ENCODE measurements at regions of chr16 and their contacts with region 1.

Region 1: DNA sequence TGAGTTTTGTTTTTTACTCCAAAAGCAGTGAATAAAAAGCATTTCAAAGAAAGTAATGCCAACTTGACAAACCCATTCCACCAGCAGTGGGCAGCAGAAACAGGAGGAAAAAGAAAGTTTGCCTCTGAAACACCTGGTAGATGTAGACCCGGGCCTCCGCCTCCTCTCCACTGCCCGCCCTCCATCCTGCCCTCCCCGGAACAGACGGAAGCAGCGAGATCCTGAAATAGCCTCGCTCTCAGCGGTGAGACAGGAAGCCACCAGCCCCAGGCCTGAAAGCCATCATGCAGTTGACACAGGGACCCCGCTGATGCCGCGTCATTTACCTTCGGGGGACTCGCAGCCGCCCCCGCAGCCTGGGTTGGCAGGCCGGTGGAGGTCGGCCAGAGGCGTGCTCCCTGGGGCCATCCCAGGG is 67.8 kb downstream of the C16orf78 start:
- DNase-seq: peak; percentile 95
- H3K4me3 ChIP-seq: peak overlapping the region; percentile 55
- H3K27ac ChIP-seq: peak overlapping the region; percentile 81
- H3K4me1 ChIP-seq: peaks cover 69% of the 10 kb centered on the region
- CTCF ChIP-seq: peak; percentile 91

Region 2: GRCh38 chr16:49463529-49463928 is 22.2 kb after region 1 on chr16:
- CTCF ChIA-PET with region 1: interaction called, 4 read pairs
- POLR2A ChIA-PET with region 1: interaction called, 10 read pairs
- intact Hi-C with region 1: loop called (anchors 1 kb)
- DNase-seq: peak; percentile 94
- H3K4me3 ChIP-seq: peak overlapping the region; percentile 42
- H3K27ac ChIP-seq: peak overlapping the region; percentile 78
- H3K4me1 ChIP-seq: peaks cover 60% of the 10 kb centered on the region
- CTCF ChIP-seq: peak; percentile 9; the same call in 1 of the 2 replicates

Region 3: DNA sequence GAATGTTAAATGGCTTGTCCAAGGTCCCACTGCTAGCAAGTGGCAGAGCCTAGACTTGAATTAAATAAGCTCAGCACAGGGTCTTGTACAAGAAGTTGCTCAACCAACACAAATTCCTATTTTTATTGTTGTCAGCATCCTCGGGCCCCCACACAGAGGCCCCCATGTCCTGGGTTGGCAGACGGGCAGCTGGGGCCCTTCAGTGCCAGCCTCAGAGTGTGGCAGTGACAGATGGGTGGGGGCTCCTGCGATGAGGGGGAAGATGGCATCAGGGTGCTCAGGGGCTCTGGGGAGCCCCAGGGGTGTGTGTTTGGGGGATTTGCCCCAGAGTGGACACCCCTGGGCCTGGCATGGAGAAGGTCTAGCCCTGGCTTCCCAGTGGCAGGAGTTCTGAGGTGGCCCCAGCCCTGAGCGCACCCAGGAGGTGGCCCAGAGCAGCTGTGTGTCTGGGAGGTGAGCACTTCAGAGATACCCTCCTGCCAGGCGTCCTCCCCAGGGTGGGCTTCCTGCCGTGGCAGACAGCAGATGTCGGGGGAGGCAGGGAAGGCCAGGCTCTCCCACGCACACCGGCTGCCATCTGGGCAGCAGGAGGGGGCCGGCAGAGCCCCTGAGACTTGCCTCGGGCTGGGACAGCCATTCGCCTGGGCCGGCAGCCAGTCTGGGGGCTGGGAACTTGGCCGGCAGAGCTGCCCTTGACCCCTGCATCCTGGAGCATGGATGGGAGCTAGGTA is 83.0 kb after region 1 on chr16:
- CTCF ChIA-PET with region 1: no interaction called
- POLR2A ChIA-PET with region 1: interaction called, 3 read pairs
- intact Hi-C with region 1: loop called (anchors 2 kb)
- DNase-seq: no peak
- H3K4me3 ChIP-seq: no peak overlapping the region
- H3K27ac ChIP-seq: no peak overlapping the region
- H3K4me1 ChIP-seq: peaks cover 37% of the 10 kb centered on the region
- CTCF ChIP-seq: no peak

Region 4: DNA sequence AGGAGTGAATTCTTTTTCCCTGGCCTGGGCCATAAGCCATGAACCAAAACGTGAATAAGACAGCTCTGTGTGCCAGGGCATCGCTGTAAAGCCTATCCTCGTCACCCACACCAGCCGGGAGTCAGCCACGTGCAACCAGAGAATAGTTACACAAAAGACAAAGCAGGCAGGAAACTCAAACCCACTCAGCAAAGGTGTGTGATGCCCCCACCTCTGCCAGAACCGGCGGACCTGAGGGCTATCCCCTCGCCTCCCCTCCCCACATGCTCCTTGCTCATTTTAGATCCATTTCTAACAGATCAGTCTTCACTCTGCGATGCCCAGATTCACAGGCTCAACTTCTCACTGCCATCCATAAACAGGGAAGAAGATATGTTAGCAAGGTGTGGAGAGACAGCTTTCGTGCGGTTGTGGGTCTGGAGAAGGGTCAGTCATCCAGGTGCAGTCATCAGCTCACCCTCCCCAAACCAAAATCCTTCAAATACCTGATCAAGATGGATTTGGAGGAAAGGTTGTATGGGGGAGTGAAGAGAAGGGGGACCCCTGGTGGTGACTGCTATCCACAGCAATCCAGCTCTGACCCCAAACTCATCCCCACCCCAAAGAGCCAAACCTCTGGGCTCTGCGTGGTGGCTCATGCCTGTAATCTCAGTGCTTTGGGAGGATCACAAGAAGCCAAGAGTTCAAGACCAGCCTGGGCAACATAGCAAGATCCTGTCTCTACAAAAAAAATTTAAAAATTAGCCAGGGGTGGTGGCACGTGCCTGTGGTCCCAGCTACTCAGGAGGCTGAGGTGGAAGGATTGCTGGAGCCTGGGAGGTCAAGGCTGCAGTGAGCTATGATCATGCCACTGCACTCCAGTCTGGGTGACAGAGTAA is 151.4 kb after region 1 on chr16:
- CTCF ChIA-PET with region 1: interaction called, 3 read pairs
- POLR2A ChIA-PET with region 1: interaction called, 4 read pairs
- intact Hi-C with region 1: loop called (anchors 1 kb)
- DNase-seq: peak; percentile 61
- H3K4me3 ChIP-seq: no peak overlapping the region
- H3K27ac ChIP-seq: no peak overlapping the region
- H3K4me1 ChIP-seq: peaks cover 25% of the 10 kb centered on the region
- CTCF ChIP-seq: peak; percentile 89

Measured in OCI-LY7 (cell line).